Ovary (tissue), 10 donors: ENCODE measurements at regions of chr9 and their contacts with region 1.

Region 1: GRCh38 chr9:129413537-129414376 is 207.1 kb downstream of the C9orf50 start:
- DNase-seq: peak; percentile 99 to 100 (median 100)
- H3K4me3 ChIP-seq: peak overlapping the region; percentile 70
- H3K27ac ChIP-seq: peak overlapping the region; percentile 97
- H3K4me1 ChIP-seq: peaks cover 15% of the 10 kb centered on the region
- H3K27me3 ChIP-seq: no peaks in the 10 kb centered on the region
- CTCF ChIP-seq: peak in 2 of 3 donors; percentile 14 to 23
- EP300 ChIP-seq: peak; percentile 91
- POLR2A ChIP-seq: peak; percentile 94

Region 2: DNA sequence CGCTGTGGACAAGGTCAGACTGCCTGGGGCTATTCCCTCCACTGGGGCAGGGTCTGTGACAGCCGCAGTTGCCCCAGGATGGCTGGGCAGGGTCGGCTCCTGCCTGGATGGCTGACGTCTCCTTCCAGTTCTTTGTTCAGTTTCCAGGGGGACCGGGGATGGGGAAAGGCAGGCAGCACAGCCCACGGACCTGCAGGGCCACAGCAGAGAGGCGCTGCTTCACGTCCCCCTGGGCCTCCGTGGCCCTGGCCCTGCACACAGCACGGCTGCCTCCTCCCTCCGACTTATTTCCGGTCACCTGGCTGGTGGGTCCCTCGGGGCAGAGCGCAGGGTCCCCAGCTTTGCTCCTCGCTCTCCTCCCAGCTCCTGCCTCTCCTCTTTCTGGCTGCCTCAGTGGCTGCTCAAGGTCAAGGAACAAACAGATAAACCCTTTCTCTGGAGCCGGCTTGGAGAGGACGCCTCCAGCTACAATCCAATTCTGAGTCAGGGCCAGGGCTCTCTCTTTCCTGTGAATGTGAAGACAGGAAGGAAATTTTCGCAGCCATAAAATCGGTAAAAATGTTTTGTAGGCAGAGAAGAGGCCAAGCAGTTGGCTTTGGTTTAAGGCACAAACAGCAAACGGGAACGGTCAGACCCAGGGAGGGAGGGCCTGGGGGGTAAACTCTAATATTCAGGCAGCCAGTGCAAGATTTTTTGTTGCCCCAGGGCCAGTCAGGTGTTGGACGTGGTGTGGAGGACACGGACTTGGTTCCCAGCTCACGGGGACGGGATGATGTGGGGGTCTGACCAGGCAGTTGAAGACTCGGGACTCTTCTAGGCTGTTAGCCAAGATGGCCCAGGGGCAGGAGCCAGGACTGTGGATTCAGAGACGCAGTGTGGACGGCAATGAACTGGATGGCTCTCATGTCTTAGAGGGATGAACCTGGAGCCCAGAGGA is 37.6 kb after region 1 on chr9:
- intact Hi-C with region 1: loop called in 1 of 4 experiments (anchors 5 kb)
- DNase-seq: peak; percentile 75 to 81 (median 78)
- H3K4me3 ChIP-seq: no peak overlapping the region
- H3K27ac ChIP-seq: peak overlapping the region; percentile 95 to 98
- H3K4me1 ChIP-seq: peaks cover 14% of the 10 kb centered on the region
- H3K27me3 ChIP-seq: no peaks in the 10 kb centered on the region
- CTCF ChIP-seq: no peak
- EP300 ChIP-seq: no peak
- POLR2A ChIP-seq: no peak

Region 3: DNA sequence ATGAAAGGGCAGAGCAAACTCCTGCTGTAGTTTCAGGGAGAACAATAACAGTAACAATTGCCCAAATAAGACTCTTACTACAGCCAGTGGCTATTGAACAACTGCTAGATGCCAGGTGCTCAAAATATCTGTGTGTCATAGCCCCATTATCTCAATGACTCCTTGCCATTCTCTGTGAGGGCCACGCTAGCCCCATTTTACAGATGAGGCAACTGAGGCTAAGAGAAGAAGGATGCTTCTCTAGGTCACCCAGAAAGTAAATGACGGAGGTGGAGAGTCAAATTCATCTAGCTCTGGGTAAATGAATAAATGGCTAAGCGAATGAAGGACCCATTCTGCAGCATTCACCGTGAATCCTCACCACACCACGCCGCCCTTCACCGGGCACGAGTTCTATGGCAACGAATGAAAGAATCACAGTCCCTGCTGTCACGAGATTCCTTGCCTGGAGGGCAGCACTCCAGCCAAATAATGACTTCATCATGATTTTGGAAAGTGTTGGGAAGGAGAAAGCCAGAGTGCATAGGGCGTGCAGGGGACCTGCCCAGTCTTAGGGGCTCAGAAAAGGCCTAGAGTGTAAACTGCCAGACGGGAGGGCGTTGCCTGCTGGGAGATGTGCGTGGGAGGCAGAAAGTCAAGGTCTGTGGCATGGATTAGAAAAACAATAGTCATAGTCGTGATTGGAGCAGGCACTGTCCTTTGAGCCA is 59.9 kb after region 1 on chr9:
- intact Hi-C with region 1: loop called in 1 of 4 experiments (anchors 10 kb)
- DNase-seq: peak; percentile 76 to 82 (median 80)
- H3K4me3 ChIP-seq: no peak overlapping the region
- H3K27ac ChIP-seq: peak overlapping the region; percentile 5 to 87
- H3K4me1 ChIP-seq: peaks cover 21% of the 10 kb centered on the region
- H3K27me3 ChIP-seq: no peaks in the 10 kb centered on the region
- CTCF ChIP-seq: no peak
- EP300 ChIP-seq: peak; percentile 31
- POLR2A ChIP-seq: no peak